GM12878 (cell line): ENCODE measurements at regions of chr2 and their contacts with region 1.

Region 1: DNA sequence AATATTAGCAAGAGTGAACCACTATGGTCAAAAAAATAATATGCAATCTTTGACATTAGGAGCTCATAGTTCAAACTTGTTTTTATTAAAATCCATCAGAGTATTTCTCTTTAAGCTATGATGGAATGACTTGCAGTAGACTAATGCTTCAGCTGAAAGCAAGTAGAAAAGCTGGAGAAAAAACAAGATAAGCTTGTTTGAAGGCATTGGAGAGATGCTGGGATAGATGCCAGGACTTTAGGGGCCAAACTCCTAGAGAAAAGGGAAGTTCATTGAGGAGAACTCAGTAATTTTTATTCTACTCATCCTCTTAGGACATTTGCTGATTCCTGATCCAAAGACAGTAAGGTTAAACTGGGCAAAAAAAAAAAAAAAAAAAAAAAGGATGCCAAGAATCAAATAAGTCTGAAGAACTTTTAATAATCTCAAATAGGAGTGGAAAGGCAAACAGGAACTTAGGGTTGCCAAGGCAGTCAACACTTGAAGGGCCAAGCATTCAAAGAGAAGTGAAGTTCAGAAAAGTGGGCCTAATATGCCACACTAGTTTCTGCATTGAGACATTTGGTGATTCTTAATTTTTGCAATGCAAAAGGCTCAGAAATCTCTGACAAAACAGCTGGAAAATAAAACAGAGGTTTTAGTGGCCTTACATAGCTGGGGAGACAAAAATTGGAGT is 19.7 kb upstream of the AFF3 start:
- DNase-seq: no peak
- ATAC-seq: no peak
- H3K4me3 ChIP-seq: no peak overlapping the region
- H3K27ac ChIP-seq: no peak overlapping the region
- H3K4me1 ChIP-seq: no peaks in the 10 kb centered on the region
- H3K27me3 ChIP-seq: no peaks in the 10 kb centered on the region; a peak in 1 of 4 replicates
- CTCF ChIP-seq: no peak
- EP300 ChIP-seq: no peak
- POLR2A ChIP-seq: no peak
- RAD21 ChIP-seq: no peak

Region 2: DNA sequence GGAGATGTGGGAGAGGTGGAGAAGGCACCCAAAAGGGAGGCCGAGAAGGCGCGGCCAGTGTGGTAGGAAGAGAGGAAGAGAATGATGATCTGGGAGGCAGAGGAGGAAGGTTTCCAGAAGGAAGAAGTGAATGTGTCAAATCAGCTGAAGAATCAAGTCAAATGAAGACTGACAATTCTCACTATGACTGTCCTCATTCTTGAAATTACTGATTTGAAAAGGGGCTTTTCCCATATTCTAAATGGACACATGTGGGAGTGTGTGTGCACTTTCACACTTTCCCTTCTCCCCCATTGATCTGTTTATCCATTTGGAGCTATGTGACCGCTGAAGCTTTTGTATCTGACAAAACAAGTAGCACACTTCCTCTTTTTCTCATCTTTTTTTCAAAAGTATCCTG is 25.8 kb before region 1 on chr2:
- CTCF ChIA-PET with region 1: no interaction called
- POLR2A ChIA-PET with region 1: no interaction called
- RAD21 ChIA-PET with region 1: no interaction called
- SMC1A ChIA-PET with region 1: no interaction called
- in situ Hi-C with region 1: no loop called
- intact Hi-C with region 1: loop called (anchors 2 kb)
- DNase-seq: peak; percentile 16
- ATAC-seq: peak; percentile 52
- H3K4me3 ChIP-seq: no peak overlapping the region
- H3K27ac ChIP-seq: no peak overlapping the region
- H3K4me1 ChIP-seq: peaks cover 20% of the 10 kb centered on the region
- H3K27me3 ChIP-seq: peaks cover 0 to 3% of the 10 kb centered on the region in 2 experiments; a peak in 1 of 4 replicates
- CTCF ChIP-seq: no peak
- EP300 ChIP-seq: peak in 1 of 2 experiments; percentile 58; a peak in 2 of 4 replicates
- POLR2A ChIP-seq: no peak
- RAD21 ChIP-seq: no peak

Region 3: DNA sequence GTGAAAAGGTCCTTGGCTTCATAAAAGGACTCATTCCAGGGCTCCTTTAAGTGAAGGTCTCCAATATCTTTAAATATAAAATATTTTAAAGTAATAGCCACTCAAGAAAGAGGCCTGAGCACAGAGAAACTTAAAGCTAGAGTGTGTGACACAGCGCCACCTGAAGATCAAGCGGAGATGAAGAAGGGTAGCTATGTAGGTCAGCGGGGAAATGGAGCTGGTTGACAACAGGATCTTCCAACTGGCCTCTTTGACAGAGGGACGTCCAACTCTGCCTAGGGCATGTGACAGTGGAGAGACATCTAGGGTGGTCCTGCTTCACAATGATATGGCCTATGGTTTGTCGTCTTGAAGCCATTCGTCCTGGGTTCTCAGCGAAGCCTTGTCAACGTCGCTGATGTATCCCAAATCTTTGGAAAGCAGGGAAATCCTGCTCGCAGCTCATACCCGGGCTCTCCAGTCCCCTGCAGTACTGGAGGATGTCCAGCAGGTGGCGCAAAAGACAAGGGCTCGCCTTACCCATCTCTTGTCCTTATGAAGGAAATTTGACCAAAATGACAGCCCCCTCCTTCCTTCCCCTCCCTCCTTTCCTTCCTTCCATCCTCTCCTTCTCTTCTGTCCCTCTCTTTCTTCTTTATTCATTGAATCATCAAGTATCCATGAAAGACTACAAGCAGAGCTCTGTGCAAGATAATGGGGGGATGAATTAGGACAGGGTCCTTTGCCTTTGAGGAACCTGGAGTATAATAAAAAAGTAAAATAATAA is 100.7 kb after region 1 on chr2:
- CTCF ChIA-PET with region 1: no interaction called
- POLR2A ChIA-PET with region 1: no interaction called
- RAD21 ChIA-PET with region 1: no interaction called
- SMC1A ChIA-PET with region 1: no interaction called
- in situ Hi-C with region 1: no loop called
- intact Hi-C with region 1: no loop called
- DNase-seq: no peak
- ATAC-seq: peak; percentile 80
- H3K4me3 ChIP-seq: no peak overlapping the region
- H3K27ac ChIP-seq: no peak overlapping the region
- H3K4me1 ChIP-seq: no peaks in the 10 kb centered on the region
- H3K27me3 ChIP-seq: no peaks in the 10 kb centered on the region; a peak in 1 of 4 replicates
- CTCF ChIP-seq: peak; percentile 88 to 98 (median 91)
- EP300 ChIP-seq: no peak
- POLR2A ChIP-seq: no peak
- RAD21 ChIP-seq: peak; percentile 93